Esophagus muscularis mucosa (tissue), 4 donors: ENCODE measurements at regions of chr2 and their contacts with region 1.

Region 1: DNA sequence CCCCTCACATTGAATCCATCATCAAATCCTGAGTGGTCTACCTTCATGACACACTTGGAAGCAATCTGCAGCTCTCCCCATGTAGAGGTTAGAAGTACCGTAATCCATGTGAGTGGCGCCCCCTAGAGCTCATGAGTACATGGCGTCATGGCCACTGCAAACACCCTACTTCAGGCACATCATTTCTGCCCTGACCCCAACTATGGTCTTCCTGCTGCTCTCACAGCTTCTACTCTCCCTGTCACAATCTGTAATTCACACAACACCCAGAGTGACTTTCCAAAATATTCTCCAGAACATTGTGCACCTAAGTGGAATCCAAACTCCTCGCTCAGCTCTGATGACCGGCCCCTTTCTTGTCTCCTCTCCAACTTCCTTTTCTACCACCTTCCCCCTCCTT is 141.9 kb downstream of the ANKRD44 start:
- DNase-seq: no peak
- H3K4me3 ChIP-seq: no peak overlapping the region
- H3K27ac ChIP-seq: peak overlapping the region; percentile 76 to 85 (median 79)
- H3K4me1 ChIP-seq: peaks cover 5 to 99% (median 86%) of the 10 kb centered on the region in 4 donors
- H3K27me3 ChIP-seq: no peaks in the 10 kb centered on the region
- CTCF ChIP-seq: peak; percentile 57 to 80 (median 73)
- EP300 ChIP-seq: peak; percentile 85
- POLR2A ChIP-seq: no peak

Region 2: DNA sequence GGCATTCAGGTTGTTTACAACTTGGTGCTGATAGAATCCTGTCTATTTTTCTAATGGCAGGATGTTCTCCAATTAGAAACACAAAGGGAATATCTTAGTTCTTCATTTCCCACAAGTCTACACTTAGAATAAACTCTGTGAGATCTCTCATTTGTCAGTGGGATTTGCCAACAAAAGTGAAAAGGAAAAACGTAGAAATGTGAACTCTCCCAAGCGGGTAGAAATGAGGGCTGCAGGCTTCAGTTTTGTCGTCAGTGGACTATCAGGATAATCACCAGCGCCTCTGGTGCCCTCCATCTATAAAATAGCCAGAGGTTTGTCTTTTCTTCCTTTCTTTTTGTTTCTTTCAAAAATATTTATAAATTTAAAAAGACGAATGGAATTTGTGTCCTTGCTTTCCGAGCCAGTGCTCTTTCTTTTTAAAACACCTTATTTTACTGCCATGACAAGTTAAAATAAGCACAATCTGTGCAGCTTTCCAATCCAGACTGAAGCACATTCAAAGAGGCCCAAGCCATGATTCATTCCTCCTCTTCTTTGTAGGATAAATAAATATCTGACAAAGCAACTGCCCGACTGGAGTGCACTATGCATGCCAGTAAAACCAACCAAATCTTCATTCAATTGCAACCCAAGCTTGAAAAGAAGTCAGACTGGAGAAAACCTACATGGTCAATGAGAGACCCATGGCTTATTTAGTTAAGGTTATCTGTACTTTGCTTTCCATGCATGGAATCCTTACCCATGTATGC is 43.9 kb before region 1 on chr2:
- intact Hi-C with region 1: loop called (anchors 2 kb)
- DNase-seq: no peak
- H3K4me3 ChIP-seq: no peak overlapping the region
- H3K27ac ChIP-seq: peak overlapping the region; percentile 68 to 75 (median 73)
- H3K4me1 ChIP-seq: peaks cover 0 to 66% (median 64%) of the 10 kb centered on the region in 4 donors
- H3K27me3 ChIP-seq: no peaks in the 10 kb centered on the region
- CTCF ChIP-seq: no peak
- EP300 ChIP-seq: no peak
- POLR2A ChIP-seq: no peak